Activated T-helper 2 cell treated with anti-CD3 and anti-CD28 coated beads, Interferon-gamma antibody, Interleukin-2, Interleukin-4, amounts not matched to agents 10 μg/mL and 5 μg/mL and 100 μg/mL, durations not matched to agents 14 hours and 24 hours and 36 hours (primary cell): ENCODE measurements at regions of chr2 and their contacts with region 1.

Region 1: GRCh38 chr2:172698041-172698863 is 37.4 kb upstream of the RAPGEF4 start:
- DNase-seq: no peak
- H3K4me3 Mint-ChIP-seq: no peak overlapping the region
- H3K27ac Mint-ChIP-seq: no peak overlapping the region
- H3K4me1 Mint-ChIP-seq: peaks cover 25% of the 10 kb centered on the region
- H3K27me3 Mint-ChIP-seq: peaks cover 4% of the 10 kb centered on the region

Region 2: GRCh38 chr2:172588931-172589330 is 109.3 kb before region 1 on chr2:
- intact Hi-C with region 1: loop called (anchors 5 kb)
- DNase-seq: no peak
- H3K4me3 Mint-ChIP-seq: no peak overlapping the region
- H3K27ac Mint-ChIP-seq: no peak overlapping the region
- H3K4me1 Mint-ChIP-seq: peaks cover 22% of the 10 kb centered on the region
- H3K27me3 Mint-ChIP-seq: no peaks in the 10 kb centered on the region

Region 3: GRCh38 chr2:172639823-172640222 is 58.4 kb before region 1 on chr2:
- intact Hi-C with region 1: no loop called
- DNase-seq: no peak
- H3K4me3 Mint-ChIP-seq: no peak overlapping the region
- H3K27ac Mint-ChIP-seq: peak overlapping the region; percentile 48
- H3K4me1 Mint-ChIP-seq: peaks cover 23% of the 10 kb centered on the region
- H3K27me3 Mint-ChIP-seq: no peaks in the 10 kb centered on the region

Region 4: DNA sequence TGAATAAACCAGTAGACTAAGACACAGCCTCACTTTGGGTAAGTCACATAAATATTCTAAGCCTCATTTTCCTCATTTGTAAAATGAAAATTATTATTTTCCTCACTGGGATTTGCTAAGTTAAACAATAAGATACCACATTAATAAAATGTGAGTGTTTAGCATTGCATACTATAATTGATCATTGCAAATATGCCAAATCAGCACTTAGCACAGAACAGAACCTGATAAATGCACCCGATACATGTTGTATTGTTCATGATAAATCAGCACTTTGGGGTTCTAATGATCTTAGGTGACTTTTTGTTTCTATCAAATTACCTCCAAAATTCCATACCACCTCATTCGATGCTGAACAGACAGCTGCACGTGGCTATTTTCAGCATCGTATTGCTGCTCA is 12.8 kb before region 1 on chr2:
- intact Hi-C with region 1: no loop called
- DNase-seq: no peak
- H3K4me3 Mint-ChIP-seq: no peak overlapping the region
- H3K27ac Mint-ChIP-seq: no peak overlapping the region
- H3K4me1 Mint-ChIP-seq: peaks cover 9% of the 10 kb centered on the region
- H3K27me3 Mint-ChIP-seq: peaks cover 4% of the 10 kb centered on the region

Region 5: DNA sequence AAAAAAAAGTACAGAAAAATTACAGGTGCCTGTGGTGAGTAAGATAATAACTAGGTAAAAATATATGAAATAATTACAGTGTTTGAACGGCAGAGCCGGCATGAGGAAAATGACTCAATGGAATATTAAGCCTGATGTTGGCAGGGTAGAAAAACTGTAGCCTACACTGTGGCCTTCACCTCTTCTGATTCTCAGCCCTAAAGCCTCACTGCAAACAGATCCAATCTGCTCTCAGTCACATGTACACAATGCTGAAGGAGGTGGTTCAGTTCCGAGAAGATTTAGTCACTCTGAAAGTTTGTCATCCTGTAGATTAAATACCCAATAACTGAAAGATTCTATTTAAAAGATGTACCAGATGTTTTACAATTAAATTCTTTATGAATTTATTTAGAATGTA is 310.5 kb after region 1 on chr2:
- intact Hi-C with region 1: no loop called
- DNase-seq: no peak
- H3K4me3 Mint-ChIP-seq: no peak overlapping the region
- H3K27ac Mint-ChIP-seq: no peak overlapping the region
- H3K4me1 Mint-ChIP-seq: peaks cover 7% of the 10 kb centered on the region
- H3K27me3 Mint-ChIP-seq: peaks cover 13% of the 10 kb centered on the region

Region 6: GRCh38 chr2:173414823-173415322 is 716.6 kb after region 1 on chr2:
- intact Hi-C with region 1: no loop called
- DNase-seq: no peak
- H3K4me3 Mint-ChIP-seq: no peak overlapping the region
- H3K27ac Mint-ChIP-seq: no peak overlapping the region
- H3K4me1 Mint-ChIP-seq: no peaks in the 10 kb centered on the region
- H3K27me3 Mint-ChIP-seq: peaks cover 21% of the 10 kb centered on the region